ENCODE measurements at regions of chr14 and their contacts with region 1.

Region 1: GRCh38 chr14:58297762-58298476 is 436 bp upstream of the ARID4A start:
- H3K4me3 Mint-ChIP-seq: no peak overlapping the region
- H3K27ac Mint-ChIP-seq: no peak overlapping the region
- H3K4me1 Mint-ChIP-seq: peaks cover 26% of the 10 kb centered on the region
- H3K27me3 Mint-ChIP-seq: no peaks in the 10 kb centered on the region

Region 2: DNA sequence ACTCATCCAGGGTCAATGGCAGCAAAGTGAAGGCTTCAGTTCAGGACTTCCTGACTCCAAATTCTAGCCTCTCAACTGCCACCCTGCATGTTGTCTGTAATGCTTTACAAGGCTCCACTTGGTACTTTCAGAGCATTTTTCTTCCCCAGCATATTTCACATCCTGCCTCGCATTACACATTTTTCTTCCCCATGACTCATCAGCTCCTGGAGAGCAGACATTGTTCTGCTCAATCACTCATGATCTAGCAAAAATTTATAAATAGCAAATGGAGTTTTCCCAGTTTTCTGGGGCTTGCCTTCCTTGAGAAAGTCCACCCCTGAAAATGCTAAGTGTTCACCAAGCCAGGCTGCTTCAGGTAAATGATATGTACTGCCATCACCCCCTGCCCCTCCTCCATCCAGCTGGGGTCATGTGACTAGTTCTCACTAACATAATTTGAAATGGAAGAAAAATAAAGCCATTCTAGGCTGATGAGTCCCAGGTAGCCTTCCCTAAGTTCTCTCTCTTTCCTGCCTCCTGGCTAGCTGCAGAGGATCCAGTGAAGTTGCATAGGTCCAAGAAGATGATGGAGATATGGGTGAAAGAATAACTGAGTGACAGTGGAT is 215.3 kb before region 1 on chr14:
- intact Hi-C with region 1: no loop called
- H3K4me3 Mint-ChIP-seq: no peak overlapping the region
- H3K27ac Mint-ChIP-seq: peak overlapping the region; percentile 74
- H3K4me1 Mint-ChIP-seq: peaks cover 17% of the 10 kb centered on the region
- H3K27me3 Mint-ChIP-seq: no peaks in the 10 kb centered on the region

Region 3: DNA sequence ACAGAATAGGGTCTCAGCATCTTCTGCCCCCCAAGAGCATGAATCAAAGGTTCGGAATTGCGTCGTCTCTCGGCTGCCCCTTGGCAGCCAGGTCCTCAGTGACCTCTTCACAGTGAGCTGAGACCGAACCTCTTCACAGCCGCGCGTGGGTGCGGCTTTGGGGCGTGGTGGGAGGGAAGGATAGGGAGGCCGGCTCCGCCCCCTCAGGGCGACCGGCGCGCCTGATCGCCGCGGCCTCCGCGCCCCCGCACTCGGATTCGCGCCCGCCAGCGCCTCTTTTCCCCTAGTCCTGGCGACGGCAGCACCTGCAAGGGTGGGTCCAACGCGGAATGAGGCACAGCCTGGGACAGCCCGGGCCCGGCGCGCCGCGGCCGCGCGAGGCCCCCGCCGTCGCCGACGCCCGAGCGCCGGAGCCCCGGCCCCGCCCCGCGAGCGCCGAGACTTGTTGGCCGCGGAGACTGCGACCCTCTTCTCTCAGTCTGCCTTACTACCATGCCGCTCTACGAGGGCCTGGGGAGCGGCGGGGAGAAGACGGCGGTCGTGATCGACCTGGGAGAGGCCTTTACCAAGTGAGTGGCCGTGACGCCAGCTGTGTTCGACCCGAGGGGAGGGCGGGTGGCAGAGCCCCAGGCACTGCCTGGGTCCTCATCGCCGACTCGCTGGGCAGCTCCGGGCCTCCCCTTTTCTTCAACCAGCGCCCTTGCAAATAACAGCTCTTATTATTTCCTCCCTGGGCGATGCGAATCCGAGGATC is 98.0 kb before region 1 on chr14 and contains the start of gene ACTR10:
- intact Hi-C with region 1: loop called (anchors 1 kb)
- H3K4me3 Mint-ChIP-seq: peak within 1 kb of the TSS; percentile 95
- H3K27ac Mint-ChIP-seq: peak within 1 kb of the TSS; percentile 98
- H3K4me1 Mint-ChIP-seq: peaks cover 10% of the 10 kb centered on the region
- H3K27me3 Mint-ChIP-seq: peaks cover 12% of the 10 kb centered on the region

Region 4: GRCh38 chr14:58244556-58245387 is 53.1 kb before region 1 on chr14 and contains the start of gene PSMA3:
- intact Hi-C with region 1: loop called (anchors 1 kb)
- H3K4me3 Mint-ChIP-seq: peak within 1 kb of the TSS; percentile 95
- H3K27ac Mint-ChIP-seq: peak within 1 kb of the TSS; percentile 96
- H3K4me1 Mint-ChIP-seq: peaks cover 35% of the 10 kb centered on the region
- H3K27me3 Mint-ChIP-seq: no peaks in the 10 kb centered on the region

Region 5: GRCh38 chr14:58265401-58265800 is 32.5 kb before region 1 on chr14:
- intact Hi-C with region 1: loop called (anchors 5 kb)
- H3K4me3 Mint-ChIP-seq: no peak overlapping the region
- H3K27ac Mint-ChIP-seq: peak overlapping the region; percentile 6
- H3K4me1 Mint-ChIP-seq: peaks cover 15% of the 10 kb centered on the region
- H3K27me3 Mint-ChIP-seq: no peaks in the 10 kb centered on the region

Region 6: GRCh38 chr14:58280954-58281787 is 16.7 kb before region 1 on chr14:
- intact Hi-C with region 1: loop called (anchors 1 kb)
- H3K4me3 Mint-ChIP-seq: peak overlapping the region; percentile 55
- H3K27ac Mint-ChIP-seq: peak overlapping the region; percentile 96
- H3K4me1 Mint-ChIP-seq: peaks cover 66% of the 10 kb centered on the region
- H3K27me3 Mint-ChIP-seq: no peaks in the 10 kb centered on the region

Region 7: DNA sequence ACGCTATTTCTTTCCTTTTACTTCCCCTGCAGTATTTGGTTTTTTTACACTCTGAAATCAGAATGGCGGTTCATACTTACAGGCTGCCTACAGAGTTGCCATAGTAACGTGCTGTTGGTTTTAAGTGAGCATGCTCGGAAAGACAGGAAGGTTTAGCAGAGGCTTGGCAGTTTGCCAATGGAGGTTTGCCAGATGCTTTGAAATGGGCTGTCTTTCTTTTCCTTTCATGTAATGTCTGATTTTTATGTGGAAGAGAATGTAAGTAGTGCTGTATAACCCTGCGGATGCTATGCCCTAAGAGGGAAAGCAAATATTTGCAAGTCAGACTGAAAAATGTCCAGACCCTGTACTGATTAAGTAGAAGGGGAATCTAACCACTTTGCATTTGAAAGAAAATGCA is 33.2 kb after region 1 on chr14:
- intact Hi-C with region 1: loop called (anchors 2 kb)
- H3K4me3 Mint-ChIP-seq: no peak overlapping the region
- H3K27ac Mint-ChIP-seq: peak overlapping the region; percentile 69
- H3K4me1 Mint-ChIP-seq: peaks cover 18% of the 10 kb centered on the region
- H3K27me3 Mint-ChIP-seq: no peaks in the 10 kb centered on the region

Region 8: GRCh38 chr14:58427281-58428117 is 129.6 kb after region 1 on chr14 and contains the starts of genes KIAA0586 and TIMM9:
- intact Hi-C with region 1: loop called (anchors 5 kb)
- H3K4me3 Mint-ChIP-seq: peak within 1 kb of the TSS; percentile 85
- H3K27ac Mint-ChIP-seq: peak within 1 kb of the TSS; percentile 94
- H3K4me1 Mint-ChIP-seq: peaks cover 10% of the 10 kb centered on the region
- H3K27me3 Mint-ChIP-seq: no peaks in the 10 kb centered on the region

Measured in dendritic cell treated with granulocyte-macrophage colony-stimulating factor and Interleukin-4, amounts not matched to agents 40 ng/mL and 50 ng/mL, for 4 days (primary cell).